Dorsolateral prefrontal cortex (tissue), 120 donors: ENCODE measurements at regions of chr2 and their contacts with region 1.

Region 1: GRCh38 chr2:168136392-168136977 is 110.9 kb downstream of the STK39 start:
- DNase-seq: no peak
- H3K4me3 ChIP-seq: no peak overlapping the region
- H3K27ac ChIP-seq: peak overlapping the region in 1 of 59 donors; percentile 1
- H3K27me3 ChIP-seq: no peaks in the 10 kb centered on the region
- CTCF ChIP-seq: peak; percentile 38 to 84 (median 66)

Region 2: DNA sequence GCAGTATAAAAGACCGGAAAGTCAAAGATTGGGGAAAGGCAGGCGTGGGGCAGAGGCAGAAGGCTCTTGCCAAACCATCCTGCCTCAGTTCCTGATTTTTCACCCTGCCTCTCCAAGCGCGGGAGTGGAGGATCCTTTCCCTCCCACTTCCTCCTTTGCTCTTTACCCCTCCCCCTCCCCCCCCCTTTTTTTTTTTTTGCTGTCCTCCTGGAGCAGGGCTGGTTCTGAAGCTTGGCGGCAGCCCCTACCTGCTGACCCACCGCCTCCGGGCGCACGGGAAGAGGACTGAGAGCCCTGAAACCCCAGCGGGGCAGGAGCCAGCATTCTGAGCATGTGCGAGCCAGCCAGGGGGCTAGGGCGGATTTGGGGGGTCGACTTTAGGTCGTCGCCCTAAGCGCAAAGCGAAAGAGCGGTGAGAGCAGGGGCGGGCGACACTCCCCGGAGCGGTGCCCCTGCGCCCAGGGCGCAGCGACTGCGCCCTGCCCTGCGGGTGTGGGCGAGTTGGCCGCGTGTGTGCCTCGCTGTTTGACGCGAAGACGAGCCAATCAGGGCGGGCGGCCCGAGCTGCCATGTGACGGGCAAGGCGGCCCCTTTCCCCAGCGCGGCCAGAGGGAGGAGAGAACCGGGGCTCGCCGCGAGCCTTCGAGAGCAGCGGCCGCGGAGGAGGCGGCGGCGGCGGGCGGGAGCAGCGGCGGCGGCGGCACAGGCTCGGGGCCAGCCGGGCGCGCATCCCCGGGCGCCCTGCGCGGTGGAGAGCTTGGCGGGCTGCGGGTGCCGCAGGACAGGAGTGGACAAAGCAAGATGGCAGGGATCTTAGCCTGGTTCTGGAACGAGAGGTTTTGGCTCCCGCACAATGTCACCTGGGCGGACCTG is 319.4 kb after region 1 on chr2 and contains the start of gene CERS6:
- intact Hi-C with region 1: loop called in 1 of 2 experiments (anchors 10 kb)
- DNase-seq: peak; percentile 79 to 97 (median 93)
- H3K4me3 ChIP-seq: peak within 1 kb of the TSS; percentile 48 to 99 (median 82)
- H3K27ac ChIP-seq: peak within 1 kb of the TSS in 56 of 59 donors; percentile 2 to 92 (median 84)
- H3K27me3 ChIP-seq: no peaks in the 10 kb centered on the region
- CTCF ChIP-seq: peak in 2 of 56 donors; percentile 7 to 10
- total RNA-seq, gene CERS6: 20.1 to 73.1 (median 49.0) TPM

Region 3: DNA sequence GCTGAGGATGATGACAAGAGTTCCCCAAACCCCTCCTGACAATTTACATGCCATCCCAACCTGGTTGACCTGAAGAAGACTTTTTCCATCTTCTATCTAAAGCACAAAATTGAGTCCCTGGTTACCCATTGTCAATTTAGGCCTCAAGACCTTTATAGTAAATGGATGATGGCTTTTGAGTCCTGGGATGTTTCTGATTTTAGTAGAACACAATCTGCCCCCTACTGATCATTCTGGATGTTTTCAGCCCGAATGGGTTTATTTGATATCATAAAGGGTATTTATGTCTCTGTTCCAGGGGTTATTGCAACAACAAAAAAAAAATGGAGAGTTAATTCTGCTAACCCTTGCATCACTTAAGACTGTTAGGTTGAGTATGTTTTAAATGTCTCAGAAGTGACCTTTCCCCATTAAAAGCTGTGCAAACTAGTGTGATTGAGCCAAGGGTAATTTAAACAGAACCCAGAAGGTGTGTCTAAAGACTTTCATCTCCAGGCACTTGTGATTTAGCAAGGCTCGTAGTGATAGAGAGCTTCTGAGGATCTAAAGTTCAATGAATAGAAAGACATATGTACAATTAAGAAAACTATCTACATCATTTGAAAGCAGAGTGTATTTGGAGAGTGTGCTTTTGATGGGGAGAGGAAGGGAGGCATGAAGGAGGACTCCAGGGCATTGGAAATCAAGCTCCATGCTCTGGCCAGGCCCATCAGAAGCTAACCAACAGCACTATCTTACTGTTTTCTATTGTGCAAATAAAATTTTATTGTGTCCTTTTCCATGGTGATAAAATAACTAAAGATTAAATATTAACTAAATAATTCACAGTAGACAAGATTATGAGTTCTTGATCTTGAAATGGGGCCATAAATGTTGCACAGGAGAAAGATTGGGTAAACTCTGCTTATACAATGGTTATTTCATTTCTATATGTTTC is 569.3 kb after region 1 on chr2:
- intact Hi-C with region 1: loop called in 1 of 2 experiments (anchors 10 kb)
- DNase-seq: no peak
- H3K4me3 ChIP-seq: no peak overlapping the region
- H3K27ac ChIP-seq: no peak overlapping the region
- H3K27me3 ChIP-seq: no peaks in the 10 kb centered on the region
- CTCF ChIP-seq: peak in 54 of 56 donors; percentile 26 to 73 (median 49)